ENCODE measurements at regions of chr14 and their contacts with region 1.

Region 1: GRCh38 chr14:73524493-73524892 is 12.4 kb upstream of the ACOT1 start:
- DNase-seq: no peak
- H3K4me3 ChIP-seq: no peak overlapping the region
- H3K27ac ChIP-seq: no peak overlapping the region
- H3K4me1 ChIP-seq: peaks cover 6 to 15% (median 8%) of the 10 kb centered on the region in 4 donors
- H3K27me3 ChIP-seq: no peaks in the 10 kb centered on the region
- CTCF ChIP-seq: no peak
- EP300 ChIP-seq: no peak
- POLR2A ChIP-seq: no peak

Region 2: DNA sequence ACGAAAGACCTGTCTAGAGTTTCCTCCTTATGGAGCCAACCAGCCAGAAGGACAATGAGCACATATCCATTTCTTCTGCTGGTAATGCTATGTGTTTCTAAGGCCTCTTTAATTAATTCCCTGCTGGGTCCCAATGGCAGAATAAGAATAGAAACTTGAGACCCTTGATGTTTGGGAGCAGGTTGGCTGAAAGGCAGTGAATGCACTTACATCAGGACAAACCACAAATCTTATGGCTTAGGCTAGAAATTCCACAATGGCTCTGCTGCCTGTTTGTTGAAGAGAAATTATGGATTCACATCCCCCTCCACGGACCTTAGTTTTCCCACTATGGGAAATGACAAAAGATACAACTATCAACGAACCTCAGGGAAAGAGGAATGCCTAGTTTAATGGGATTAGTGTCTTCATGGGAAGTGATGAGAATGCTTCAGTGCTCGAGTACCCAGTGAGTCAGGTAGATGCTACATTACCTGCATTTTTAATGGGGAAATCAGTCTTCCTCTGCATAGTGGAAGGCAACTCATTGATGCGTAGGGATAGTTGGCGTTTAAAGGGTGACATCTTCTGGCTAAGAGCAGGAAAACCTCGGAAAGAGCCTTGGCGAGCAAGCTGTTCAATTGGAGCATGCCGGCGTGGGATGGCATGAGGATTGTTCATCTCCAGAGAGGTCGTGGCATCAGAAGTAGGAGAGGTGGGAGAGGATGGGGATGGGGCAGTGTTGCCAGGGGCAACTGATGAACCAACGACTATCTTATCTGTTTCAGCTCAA is 240.7 kb before region 1 on chr14:
- intact Hi-C with region 1: no loop called
- DNase-seq: no peak
- H3K4me3 ChIP-seq: no peak overlapping the region
- H3K27ac ChIP-seq: no peak overlapping the region
- H3K4me1 ChIP-seq: peaks cover 0 to 9% (median 3%) of the 10 kb centered on the region in 4 donors
- H3K27me3 ChIP-seq: no peaks in the 10 kb centered on the region
- CTCF ChIP-seq: peak; percentile 16 to 32 (median 20)
- EP300 ChIP-seq: no peak
- POLR2A ChIP-seq: no peak

Region 3: GRCh38 chr14:73568381-73568781 is 43.9 kb after region 1 on chr14:
- intact Hi-C with region 1: loop called (anchors 10 kb)
- DNase-seq: no peak
- H3K4me3 ChIP-seq: peak overlapping the region; percentile 55 to 92 (median 80)
- H3K27ac ChIP-seq: peak overlapping the region; percentile 89 to 97 (median 96)
- H3K4me1 ChIP-seq: peaks cover 13 to 55% (median 39%) of the 10 kb centered on the region in 4 donors
- H3K27me3 ChIP-seq: peaks cover 0 to 3% (median 0%) of the 10 kb centered on the region in 4 donors
- CTCF ChIP-seq: no peak
- EP300 ChIP-seq: no peak
- POLR2A ChIP-seq: no peak

Measured in esophagus muscularis mucosa (tissue), 4 donors.